Adrenal gland (tissue), 19 donors: ENCODE measurements at regions of chr12 and their contacts with region 1.

Region 1: DNA sequence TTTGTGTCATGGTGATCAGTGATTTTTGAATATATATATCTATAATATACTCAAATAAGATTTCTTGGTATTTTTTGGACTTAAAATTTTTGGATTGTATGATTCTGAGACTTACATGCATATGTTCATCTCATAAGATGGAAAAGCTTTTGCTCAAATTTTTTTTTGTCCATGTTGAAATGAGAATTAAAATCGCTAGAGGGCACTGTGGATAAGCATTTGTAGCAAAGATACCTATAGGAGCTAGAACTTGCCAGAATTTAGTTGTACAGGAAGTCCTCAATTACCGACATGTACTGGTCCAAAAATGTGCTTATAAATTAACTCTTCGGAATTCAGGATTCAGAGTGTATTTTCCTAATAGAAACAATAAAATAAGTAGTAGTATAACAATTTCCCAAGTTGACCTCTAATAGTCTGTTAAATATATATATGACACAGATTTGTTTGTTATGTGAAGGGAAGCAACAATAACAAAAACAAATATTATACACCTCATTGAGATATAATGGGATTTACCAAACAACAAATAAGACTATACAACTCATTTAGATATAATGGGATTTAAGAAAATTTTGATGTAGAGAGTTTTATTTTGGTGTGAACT is 179.6 kb downstream of the TMEM117 start:
- DNase-seq: no peak
- H3K4me3 ChIP-seq: no peak overlapping the region
- H3K27ac ChIP-seq: no peak overlapping the region
- H3K4me1 ChIP-seq: no peaks in the 10 kb centered on the region
- H3K27me3 ChIP-seq: no peaks in the 10 kb centered on the region
- CTCF ChIP-seq: peak; percentile 24 to 71 (median 52)
- POLR2A ChIP-seq: no peak

Region 2: GRCh38 chr12:43586646-43587245 is 428.7 kb before region 1 on chr12:
- intact Hi-C with region 1: no loop called
- DNase-seq: no peak
- H3K4me3 ChIP-seq: no peak overlapping the region
- H3K27ac ChIP-seq: no peak overlapping the region
- H3K4me1 ChIP-seq: no peaks in the 10 kb centered on the region
- H3K27me3 ChIP-seq: no peaks in the 10 kb centered on the region
- CTCF ChIP-seq: no peak
- POLR2A ChIP-seq: no peak

Region 3: DNA sequence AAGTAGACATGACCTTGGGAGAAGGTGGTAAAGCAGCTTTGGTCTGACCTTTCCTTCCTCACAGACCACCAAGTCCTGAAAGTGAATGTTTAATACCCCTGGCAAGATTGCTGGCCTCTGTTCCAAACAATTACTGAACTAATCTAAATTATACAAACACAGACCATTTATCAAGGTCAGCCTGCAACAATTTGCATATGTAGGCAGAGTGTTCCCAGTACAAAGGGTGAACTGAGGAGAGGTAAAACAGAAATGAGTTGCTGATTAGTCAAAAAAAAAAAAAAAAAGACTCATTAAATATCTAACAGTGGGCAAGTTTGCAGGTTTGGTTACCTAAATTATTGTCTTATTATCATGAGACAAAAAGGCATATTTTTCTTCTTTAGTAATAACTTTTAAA is 326.9 kb after region 1 on chr12:
- intact Hi-C with region 1: loop called in 1 of 2 experiments (anchors 10 kb)
- DNase-seq: no peak
- H3K4me3 ChIP-seq: no peak overlapping the region
- H3K27ac ChIP-seq: no peak overlapping the region
- H3K4me1 ChIP-seq: peaks cover 0 to 7% of the 10 kb centered on the region in 2 donors
- H3K27me3 ChIP-seq: no peaks in the 10 kb centered on the region
- CTCF ChIP-seq: no peak
- POLR2A ChIP-seq: no peak

Region 4: GRCh38 chr12:44930972-44931600 is 915.6 kb after region 1 on chr12:
- intact Hi-C with region 1: loop called in 1 of 2 experiments (anchors 5 kb)
- DNase-seq: no peak
- H3K4me3 ChIP-seq: no peak overlapping the region
- H3K27ac ChIP-seq: no peak overlapping the region
- H3K4me1 ChIP-seq: no peaks in the 10 kb centered on the region
- H3K27me3 ChIP-seq: no peaks in the 10 kb centered on the region
- CTCF ChIP-seq: peak; percentile 40 to 70 (median 54)
- POLR2A ChIP-seq: no peak